Sigmoid colon (tissue), 7 donors: ENCODE measurements at regions of chrX and their contacts with region 1.

Region 1: DNA sequence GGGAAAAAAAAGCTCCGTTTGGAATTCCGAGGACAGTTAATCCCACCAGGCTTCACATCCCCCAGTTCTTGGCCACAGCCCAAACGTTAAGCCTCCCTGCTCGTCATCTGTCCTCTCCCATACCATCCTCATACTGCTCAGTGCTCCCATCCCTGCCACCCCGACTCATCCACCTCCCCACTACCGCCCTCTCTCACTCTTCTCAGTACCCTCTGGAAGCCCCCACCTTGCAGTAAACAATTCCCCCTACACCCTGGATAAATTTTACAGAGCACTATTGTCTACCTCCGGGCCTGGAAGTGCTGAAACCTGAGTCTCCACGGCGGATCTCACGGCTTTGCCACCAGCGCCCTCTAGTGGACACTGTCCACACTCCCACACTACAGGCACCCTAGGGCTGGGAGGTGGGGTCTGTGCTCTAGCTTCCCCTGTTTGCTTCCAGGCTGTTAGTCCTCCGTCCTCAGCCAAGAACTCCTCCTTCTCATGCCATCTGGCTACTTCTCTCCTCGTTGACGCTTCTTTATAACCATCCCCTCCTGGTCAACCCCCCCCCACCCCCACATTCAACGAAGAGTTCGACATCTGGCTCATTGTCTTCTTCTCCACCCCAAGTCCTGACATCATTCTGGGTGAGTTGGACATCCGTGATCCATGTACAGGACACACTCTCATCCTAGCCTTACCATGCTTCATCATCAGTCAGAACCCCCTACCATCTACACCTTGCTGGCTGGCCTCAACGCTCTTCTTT is 54.5 kb downstream of the RTL9 start:
- DNase-seq: peak; percentile 77
- H3K4me3 ChIP-seq: no peak overlapping the region
- H3K27ac ChIP-seq: no peak overlapping the region
- H3K4me1 ChIP-seq: peaks cover 0 to 9% (median 0%) of the 10 kb centered on the region in 4 donors
- H3K27me3 ChIP-seq: no peaks in the 10 kb centered on the region
- CTCF ChIP-seq: peak; percentile 35 to 72 (median 54)
- EP300 ChIP-seq: no peak
- POLR2A ChIP-seq: no peak

Region 2: GRCh38 chrX:110159865-110160264 is 253.3 kb before region 1 on chrX:
- intact Hi-C with region 1: loop called (anchors 1 kb)
- DNase-seq: no peak
- H3K4me3 ChIP-seq: no peak overlapping the region
- H3K27ac ChIP-seq: no peak overlapping the region
- H3K4me1 ChIP-seq: no peaks in the 10 kb centered on the region
- H3K27me3 ChIP-seq: no peaks in the 10 kb centered on the region
- CTCF ChIP-seq: no peak
- EP300 ChIP-seq: no peak
- POLR2A ChIP-seq: no peak